Heart left ventricle (tissue), 16 donors: ENCODE measurements at regions of chr16 and their contacts with region 1.

Region 1: GRCh38 chr16:57519796-57520360 is 16.5 kb downstream of the CCDC102A start:
- DNase-seq: peak; percentile 70 to 91 (median 80)
- ATAC-seq: peak; percentile 56 to 88 (median 81)
- H3K4me3 ChIP-seq: no peak overlapping the region
- H3K27ac ChIP-seq: no peak overlapping the region
- H3K4me1 ChIP-seq: peaks cover 0 to 12% (median 3%) of the 10 kb centered on the region in 12 donors
- H3K27me3 ChIP-seq: peaks cover 0 to 6% (median 0%) of the 10 kb centered on the region in 9 donors
- CTCF ChIP-seq: peak; percentile 89 to 99 (median 97)
- POLR2A ChIP-seq: no peak

Region 2: DNA sequence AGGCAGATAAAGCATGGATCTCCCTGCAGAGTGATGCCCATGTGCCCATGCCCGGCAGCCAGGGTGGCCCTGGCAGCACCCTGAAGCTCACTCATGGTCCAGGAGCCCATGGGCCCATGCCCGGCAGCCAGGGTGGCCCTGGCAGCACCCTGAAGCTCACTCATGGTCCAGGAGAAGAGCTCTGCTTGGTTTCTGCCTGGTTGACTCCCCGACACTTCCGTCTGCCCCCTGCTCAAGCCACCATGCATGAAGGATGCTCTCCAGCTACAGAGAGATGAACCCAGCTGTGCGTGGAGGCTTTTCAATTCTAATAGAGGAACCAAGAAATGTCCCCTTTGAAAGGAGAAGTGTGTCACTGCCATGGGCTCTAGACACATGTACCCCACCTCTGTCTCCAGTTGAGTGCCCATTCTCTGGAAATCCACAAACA is 106.6 kb before region 1 on chr16:
- intact Hi-C with region 1: loop called in 6 of 10 experiments (anchors 2 to 5 kb)
- DNase-seq: no peak
- ATAC-seq: no peak
- H3K4me3 ChIP-seq: no peak overlapping the region
- H3K27ac ChIP-seq: no peak overlapping the region
- H3K4me1 ChIP-seq: peaks cover 3 to 43% (median 29%) of the 10 kb centered on the region in 12 donors
- H3K27me3 ChIP-seq: no peaks in the 10 kb centered on the region
- CTCF ChIP-seq: no peak
- POLR2A ChIP-seq: no peak

Region 3: DNA sequence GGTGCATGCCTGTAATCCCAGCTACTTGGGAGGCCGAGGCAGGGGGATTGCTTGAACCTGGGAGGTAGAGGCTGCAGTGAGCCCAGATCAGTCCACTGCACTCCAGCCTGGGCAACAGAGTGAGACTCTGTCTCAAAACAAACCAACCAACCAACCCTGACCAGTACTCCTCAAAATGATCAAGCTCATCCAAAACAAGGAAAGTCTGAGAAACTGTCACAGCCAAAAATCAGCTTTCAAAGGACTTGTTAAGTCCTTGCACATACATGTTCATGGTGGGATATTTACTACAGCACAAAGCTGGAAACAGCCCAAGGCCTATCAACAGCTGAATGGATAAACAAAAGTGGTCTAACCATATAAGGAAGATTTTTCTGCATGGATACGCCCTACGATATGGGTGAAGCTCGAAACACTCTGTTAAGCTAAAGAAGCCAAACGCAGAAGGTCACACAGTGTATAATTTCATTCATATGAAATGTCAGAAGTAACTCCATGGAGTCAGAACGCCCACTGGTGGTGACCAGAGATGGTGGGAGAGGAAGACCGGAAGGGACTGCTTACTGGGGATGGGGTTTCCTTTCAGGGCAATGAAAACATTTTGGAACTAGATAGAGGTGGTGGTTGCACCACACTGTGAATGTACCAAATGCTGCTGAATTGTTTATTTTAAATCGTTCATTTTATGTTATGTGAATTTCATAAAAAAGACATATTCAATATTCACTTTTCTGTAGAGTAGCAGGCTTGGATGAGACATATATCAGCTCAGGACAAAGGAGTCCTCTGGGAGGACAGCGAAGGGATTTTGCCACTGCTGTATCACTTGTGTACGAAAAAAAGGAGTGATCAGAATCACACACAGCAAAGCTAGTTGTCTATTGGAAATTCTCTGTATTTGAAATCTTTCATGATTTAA is 97.6 kb before region 1 on chr16:
- intact Hi-C with region 1: loop called (anchors 1 to 5 kb)
- DNase-seq: peak in 3 of 5 donors; percentile 43 to 59 (median 46)
- ATAC-seq: peak in 3 of 4 donors; percentile 29 to 60 (median 46)
- H3K4me3 ChIP-seq: no peak overlapping the region
- H3K27ac ChIP-seq: peak overlapping the region in 1 of 12 donors; percentile 39
- H3K4me1 ChIP-seq: peaks cover 4 to 52% (median 33%) of the 10 kb centered on the region in 12 donors
- H3K27me3 ChIP-seq: no peaks in the 10 kb centered on the region
- CTCF ChIP-seq: peak; percentile 48 to 80 (median 62)
- POLR2A ChIP-seq: no peak

Region 4: GRCh38 chr16:57427824-57428223 is 92.1 kb before region 1 on chr16:
- intact Hi-C with region 1: loop called in 3 of 10 experiments (anchors 5 kb)
- DNase-seq: no peak
- ATAC-seq: no peak
- H3K4me3 ChIP-seq: no peak overlapping the region
- H3K27ac ChIP-seq: no peak overlapping the region
- H3K4me1 ChIP-seq: peaks cover 0 to 18% (median 10%) of the 10 kb centered on the region in 12 donors
- H3K27me3 ChIP-seq: no peaks in the 10 kb centered on the region
- CTCF ChIP-seq: no peak
- POLR2A ChIP-seq: no peak

Region 5: GRCh38 chr16:57462209-57462977 is 57.5 kb before region 1 on chr16 and contains the start of gene POLR2C:
- intact Hi-C with region 1: loop called in 3 of 10 experiments (anchors 2 to 5 kb)
- DNase-seq: peak; percentile 87 to 95 (median 90)
- ATAC-seq: peak; percentile 81 to 92 (median 89)
- H3K4me3 ChIP-seq: peak within 1 kb of the TSS; percentile 67 to 99 (median 88)
- H3K27ac ChIP-seq: peak within 1 kb of the TSS; percentile 54 to 93 (median 86)
- H3K4me1 ChIP-seq: peaks cover 0 to 32% (median 20%) of the 10 kb centered on the region in 12 donors
- H3K27me3 ChIP-seq: no peaks in the 10 kb centered on the region
- CTCF ChIP-seq: peak; percentile 90 to 99 (median 96)
- POLR2A ChIP-seq: peak in 1 of 2 donors; percentile 83
- total RNA-seq, gene POLR2C: 37.4 to 99.8 (median 48.7) TPM

Region 6: GRCh38 chr16:57470683-57471082 is 49.2 kb before region 1 on chr16:
- intact Hi-C with region 1: loop called in 7 of 10 experiments (anchors 5 kb)
- DNase-seq: peak in 4 of 5 donors; percentile 65 to 74 (median 70)
- ATAC-seq: peak in 3 of 4 donors; percentile 40 to 74 (median 48)
- H3K4me3 ChIP-seq: no peak overlapping the region
- H3K27ac ChIP-seq: peak overlapping the region in 6 of 12 donors; percentile 2 to 35 (median 10)
- H3K4me1 ChIP-seq: peaks cover 0 to 26% (median 11%) of the 10 kb centered on the region in 12 donors
- H3K27me3 ChIP-seq: no peaks in the 10 kb centered on the region
- CTCF ChIP-seq: no peak
- POLR2A ChIP-seq: no peak

Region 7: DNA sequence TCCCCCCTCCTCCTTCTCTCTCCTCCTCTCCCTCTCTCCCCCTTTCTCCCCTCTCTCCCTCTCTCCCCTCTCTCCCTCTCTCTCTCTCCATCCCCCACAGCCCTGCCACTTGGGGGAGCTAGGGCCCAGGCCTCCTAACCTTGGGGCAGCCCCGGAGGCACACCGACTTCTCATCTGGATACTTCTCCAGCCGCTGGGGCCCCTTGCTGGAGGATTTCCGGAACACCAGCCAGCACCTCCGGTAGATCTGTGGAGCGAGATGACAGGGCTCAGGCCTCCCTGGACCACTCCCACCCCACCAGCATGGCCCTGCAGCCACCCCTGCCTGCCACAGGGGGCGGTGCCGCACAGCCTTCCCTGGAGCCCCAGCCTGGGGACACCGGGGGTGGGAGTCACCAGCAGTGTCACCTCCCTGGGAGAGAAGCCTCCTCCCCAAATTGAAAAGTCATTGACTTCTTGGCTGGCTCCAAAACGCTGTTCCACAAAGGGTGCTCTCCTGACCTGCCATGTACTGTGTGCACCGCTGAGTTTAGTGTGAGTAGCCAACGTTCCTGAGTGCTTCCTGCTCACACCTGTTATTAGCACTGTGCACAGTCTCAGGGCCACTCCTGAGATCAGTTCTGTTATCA is 44.1 kb before region 1 on chr16:
- intact Hi-C with region 1: loop called in 7 of 10 experiments (anchors 5 kb)
- DNase-seq: no peak
- ATAC-seq: peak in 3 of 4 donors; percentile 32 to 66 (median 46)
- H3K4me3 ChIP-seq: no peak overlapping the region
- H3K27ac ChIP-seq: peak overlapping the region in 1 of 12 donors; percentile 5
- H3K4me1 ChIP-seq: peaks cover 5 to 64% (median 40%) of the 10 kb centered on the region in 12 donors
- H3K27me3 ChIP-seq: peaks cover 0 to 6% (median 0%) of the 10 kb centered on the region in 9 donors
- CTCF ChIP-seq: peak; percentile 18 to 65 (median 54)
- POLR2A ChIP-seq: no peak